Panc1 (cell line): ENCODE measurements at regions of chr9 and their contacts with region 1.

Region 1: DNA sequence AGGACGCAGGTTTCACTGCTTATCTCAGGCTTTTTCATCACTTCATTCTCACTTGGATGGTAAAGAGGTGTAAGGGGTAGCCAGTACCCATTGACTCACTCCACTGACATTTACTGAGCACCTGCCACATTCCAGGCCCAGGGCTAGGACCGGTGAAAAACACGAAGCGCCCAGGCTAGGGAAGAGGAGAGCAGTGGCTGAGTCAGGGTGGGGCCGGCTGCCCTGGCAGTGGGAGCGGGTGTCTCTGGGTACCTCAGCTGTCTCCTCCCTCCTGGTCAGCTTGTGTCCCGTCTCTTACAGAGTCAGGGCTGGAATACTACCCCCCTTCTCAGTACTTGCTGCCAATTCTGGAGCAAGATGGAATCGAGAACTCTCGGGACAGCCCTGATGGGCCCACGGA is 22.2 kb downstream of the LRSAM1 start:
- DNase-seq: no peak
- ATAC-seq: no peak
- H3K4me3 ChIP-seq: no peak overlapping the region
- H3K27ac ChIP-seq: no peak overlapping the region
- H3K4me1 ChIP-seq: no peaks in the 10 kb centered on the region
- H3K27me3 ChIP-seq: no peaks in the 10 kb centered on the region
- CTCF ChIP-seq: no peak

Region 2: DNA sequence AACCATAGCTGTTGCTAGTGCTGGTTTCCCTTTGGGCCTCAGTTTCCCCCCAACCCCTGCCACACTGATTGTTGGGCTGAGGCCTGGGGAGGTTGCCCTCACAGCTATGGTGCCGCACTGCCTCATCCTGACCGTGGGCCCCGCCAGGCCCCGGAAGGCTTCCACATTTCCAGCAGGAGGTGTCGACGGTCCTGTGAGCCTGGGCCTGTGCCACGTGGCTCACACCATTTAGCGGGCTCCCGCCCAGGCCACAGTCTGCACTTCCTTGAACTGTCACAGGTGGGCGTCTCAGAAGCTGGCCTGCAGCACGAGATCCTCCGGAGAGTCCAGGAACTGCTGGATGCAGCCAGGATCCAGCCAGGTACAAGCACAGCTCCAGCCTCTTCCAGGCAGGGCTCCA is 23.5 kb after region 1 on chr9:
- CTCF ChIA-PET with region 1: interaction called, 10 read pairs
- POLR2A ChIA-PET with region 1: no interaction called
- in situ Hi-C with region 1: no loop called
- intact Hi-C with region 1: no loop called
- DNase-seq: no peak
- ATAC-seq: no peak
- H3K4me3 ChIP-seq: no peak overlapping the region
- H3K27ac ChIP-seq: no peak overlapping the region
- H3K4me1 ChIP-seq: peaks cover 10% of the 10 kb centered on the region
- H3K27me3 ChIP-seq: no peaks in the 10 kb centered on the region
- CTCF ChIP-seq: no peak